H1 (cell line): ENCODE measurements at regions of chr2 and their contacts with region 1.

Region 1: GRCh38 chr2:9613291-9613690 is 17.5 kb downstream of the YWHAQ start:
- DNase-seq: no peak
- H3K4me3 ChIP-seq: no peak overlapping the region
- H3K27ac ChIP-seq: no peak overlapping the region
- H3K4me1 ChIP-seq: peaks cover 0 to 5% (median 1%) of the 10 kb centered on the region in 4 experiments; a peak in 3 of 7 replicates
- H3K27me3 ChIP-seq: no peaks in the 10 kb centered on the region
- CTCF ChIP-seq: no peak
- EP300 ChIP-seq: no peak
- POLR2A ChIP-seq: no peak
- RAD21 ChIP-seq: no peak

Region 2: DNA sequence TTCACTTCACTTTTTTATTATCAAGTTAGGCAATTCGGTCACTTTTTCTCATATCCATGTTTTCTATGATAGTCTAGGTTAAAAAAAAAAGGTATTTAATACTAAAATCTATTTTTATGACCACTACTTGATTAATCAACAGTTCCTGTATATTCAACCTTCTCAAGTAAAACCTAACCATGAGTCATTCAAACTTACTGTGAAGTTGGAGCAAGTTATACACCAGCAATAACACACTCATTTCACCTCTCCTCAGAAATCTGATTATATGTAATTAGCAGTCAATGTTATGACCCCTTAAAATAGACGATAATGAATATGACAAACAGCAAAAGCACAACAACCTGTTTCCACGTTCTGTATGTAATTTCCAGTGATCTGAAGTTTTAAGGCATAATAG is 22.6 kb before region 1 on chr2:
- CTCF ChIA-PET with region 1: interaction called, 11 read pairs
- POLR2A ChIA-PET with region 1: no interaction called
- DNase-seq: no peak
- H3K4me3 ChIP-seq: no peak overlapping the region
- H3K27ac ChIP-seq: no peak overlapping the region
- H3K4me1 ChIP-seq: peaks cover 0 to 3% (median 0%) of the 10 kb centered on the region in 4 experiments; a peak in 1 of 7 replicates
- H3K27me3 ChIP-seq: no peaks in the 10 kb centered on the region
- CTCF ChIP-seq: no peak
- EP300 ChIP-seq: no peak
- POLR2A ChIP-seq: no peak
- RAD21 ChIP-seq: no peak